ENCODE measurements at regions of chrX and their contacts with region 1.

Region 1: DNA sequence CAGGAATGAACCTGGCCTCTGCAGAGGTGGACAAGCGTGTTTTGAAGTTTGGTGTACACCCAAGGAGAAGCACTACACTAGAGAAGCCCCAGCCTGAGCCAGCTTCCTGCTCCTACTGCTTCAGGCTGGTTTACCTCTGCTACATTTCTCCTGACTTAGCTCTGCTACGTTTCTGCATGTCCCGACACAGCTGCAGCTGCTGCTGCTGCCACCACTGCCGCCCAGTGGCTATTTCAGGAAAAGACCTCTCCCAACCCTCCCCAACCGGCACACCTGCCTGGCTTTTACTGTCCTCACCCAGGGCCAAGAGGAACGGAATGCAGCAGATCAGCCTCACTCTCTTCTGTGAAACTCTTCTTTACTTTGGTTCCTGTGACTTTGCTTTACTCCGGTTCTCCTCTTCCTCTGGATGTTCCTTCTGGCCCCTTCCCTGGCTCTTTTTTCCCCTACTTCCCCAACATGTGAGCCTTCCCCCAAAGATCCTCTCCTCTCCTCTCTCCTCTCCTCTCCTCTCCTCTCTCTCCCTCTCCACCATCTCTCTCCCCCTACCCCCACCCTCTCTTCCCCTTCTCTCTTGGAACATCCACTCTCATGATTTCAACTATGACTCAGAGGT is 3.1 kb upstream of the P2RY4 start:
- DNase-seq: peak; percentile 28
- ATAC-seq: peak; percentile 64
- H3K4me3 ChIP-seq: no peak overlapping the region
- H3K27ac ChIP-seq: no peak overlapping the region
- H3K4me1 ChIP-seq: no peaks in the 10 kb centered on the region
- H3K27me3 ChIP-seq: peaks cover 11% of the 10 kb centered on the region
- CTCF ChIP-seq: peak; percentile 52
- POLR2A ChIP-seq: no peak
- RAD21 ChIP-seq: peak; percentile 55

Region 2: DNA sequence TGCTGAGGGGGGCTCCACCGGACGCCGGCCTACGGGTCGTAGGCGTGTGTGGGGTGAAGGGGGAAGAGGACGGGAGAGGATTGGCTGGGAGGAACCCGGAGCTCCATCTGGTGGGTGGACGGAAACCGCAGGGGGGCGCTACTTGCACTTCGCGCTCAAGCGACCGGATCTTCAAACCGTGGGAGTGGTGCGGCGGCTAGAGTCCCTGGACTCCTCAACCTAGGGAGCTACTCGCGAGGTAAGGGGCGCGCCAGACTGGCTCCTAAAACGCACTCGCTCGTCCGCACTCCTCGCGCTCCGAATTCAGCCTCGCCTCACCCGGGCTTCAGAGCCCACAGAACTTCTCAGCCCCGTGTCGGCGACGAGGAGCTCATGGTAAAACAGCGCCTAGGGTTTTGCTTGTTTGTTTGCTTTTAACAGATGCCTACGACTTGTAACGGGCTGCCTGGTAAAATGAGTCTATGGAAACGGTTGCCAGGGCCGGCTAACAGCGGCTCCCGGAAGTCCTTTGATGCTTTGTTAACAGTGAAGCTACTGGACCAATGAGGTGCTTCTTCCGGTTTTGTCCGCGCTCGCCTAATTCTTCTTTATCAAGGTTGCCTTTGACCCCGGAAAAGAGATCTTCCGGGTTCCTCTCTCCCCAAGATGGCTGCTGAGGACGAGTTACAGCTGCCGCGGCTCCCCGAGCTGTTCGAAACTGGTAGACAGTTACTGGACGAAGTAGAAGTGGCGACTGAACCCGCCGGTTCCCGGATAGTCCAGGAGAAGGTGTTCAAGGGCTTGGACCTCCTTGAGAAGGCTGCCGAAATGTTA is 129.6 kb before region 1 on chrX and contains the start of gene IGBP1:
- CTCF ChIA-PET with region 1: interaction called, 3 read pairs
- POLR2A ChIA-PET with region 1: no interaction called
- dilution Hi-C with region 1: no loop called
- in situ Hi-C with region 1: no loop called
- intact Hi-C with region 1: loop called (anchors 2 kb)
- DNase-seq: peak; percentile 83
- ATAC-seq: peak; percentile 88
- H3K4me3 ChIP-seq: peak within 1 kb of the TSS; percentile 83
- H3K27ac ChIP-seq: peak within 1 kb of the TSS; percentile 92
- H3K4me1 ChIP-seq: no peaks in the 10 kb centered on the region
- H3K27me3 ChIP-seq: no peaks in the 10 kb centered on the region
- CTCF ChIP-seq: peak; percentile 65
- POLR2A ChIP-seq: peak; percentile 75
- RAD21 ChIP-seq: peak; percentile 18; the same call in 1 of the 2 replicates
- total RNA-seq, gene IGBP1: 75.3 and 87.1 TPM in 2 replicates

Region 3: GRCh38 chrX:70301716-70302115 is 38.7 kb after region 1 on chrX:
- CTCF ChIA-PET with region 1: no interaction called
- POLR2A ChIA-PET with region 1: no interaction called
- dilution Hi-C with region 1: no loop called
- in situ Hi-C with region 1: no loop called
- intact Hi-C with region 1: no loop called
- DNase-seq: peak; percentile 52
- ATAC-seq: peak; percentile 37; the same call in 1 of the 2 replicates
- H3K4me3 ChIP-seq: no peak overlapping the region
- H3K27ac ChIP-seq: no peak overlapping the region; the same call in 1 of the 2 replicates
- H3K4me1 ChIP-seq: no peaks in the 10 kb centered on the region
- H3K27me3 ChIP-seq: no peaks in the 10 kb centered on the region
- CTCF ChIP-seq: no peak
- POLR2A ChIP-seq: no peak
- RAD21 ChIP-seq: no peak

Region 4: GRCh38 chrX:70324326-70324725 is 61.3 kb after region 1 on chrX:
- CTCF ChIA-PET with region 1: no interaction called
- POLR2A ChIA-PET with region 1: no interaction called
- dilution Hi-C with region 1: no loop called
- in situ Hi-C with region 1: no loop called
- intact Hi-C with region 1: no loop called
- DNase-seq: peak; percentile 44
- ATAC-seq: no peak
- H3K4me3 ChIP-seq: no peak overlapping the region
- H3K27ac ChIP-seq: no peak overlapping the region
- H3K4me1 ChIP-seq: no peaks in the 10 kb centered on the region
- H3K27me3 ChIP-seq: no peaks in the 10 kb centered on the region; the same call in 1 of the 2 replicates
- CTCF ChIP-seq: no peak
- POLR2A ChIP-seq: no peak
- RAD21 ChIP-seq: no peak